AG04449 (cell line): ENCODE measurements at regions of chr14 and their contacts with region 1.

Region 1: DNA sequence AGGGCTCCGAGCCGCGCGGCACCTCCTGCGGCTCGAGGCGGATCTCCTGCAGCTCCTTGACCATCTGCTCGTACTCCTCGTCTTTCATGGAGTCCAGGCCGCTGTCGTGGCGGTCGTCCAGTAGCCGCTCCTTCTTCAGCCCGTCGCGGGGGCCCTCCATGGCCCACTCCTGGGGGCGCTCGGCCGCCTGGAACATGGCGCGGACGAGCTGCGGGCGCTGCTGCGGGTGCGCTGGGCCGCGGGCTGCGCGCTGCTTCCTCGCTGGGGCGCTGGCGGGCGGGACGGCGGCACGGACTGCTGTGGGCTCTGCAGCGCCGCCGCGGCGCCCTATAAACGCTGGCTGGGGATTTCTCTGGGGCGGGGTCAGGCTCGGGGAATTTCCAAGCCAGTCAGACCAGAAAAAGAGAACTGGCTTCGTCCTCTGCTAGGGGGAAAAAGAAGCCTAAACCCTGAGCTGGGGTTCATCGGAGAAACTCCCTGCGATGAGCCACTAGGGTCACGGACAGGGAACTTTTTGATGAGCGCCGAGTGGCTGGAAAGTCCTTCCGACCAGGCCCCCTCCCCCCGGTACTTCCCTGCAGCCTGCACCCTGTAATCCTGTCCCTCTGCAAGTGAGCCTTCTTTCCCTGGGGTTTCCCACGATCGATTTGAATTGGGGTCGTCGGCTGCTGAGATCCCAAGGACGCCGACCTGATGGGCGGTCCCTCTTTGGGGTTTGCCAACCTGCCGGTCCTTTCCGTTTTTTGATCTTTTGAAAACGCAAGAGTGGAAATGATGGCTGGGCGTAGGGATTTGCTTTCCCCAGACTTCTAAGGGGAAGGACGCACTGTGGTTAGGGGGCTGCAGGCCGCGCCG is at the start of gene NFKBIA:
- DNase-seq: no peak
- H3K4me3 ChIP-seq: peak within 1 kb of the TSS; percentile 87
- CTCF ChIP-seq: peak; percentile 47

Region 2: GRCh38 chr14:35159742-35160409 is 244.8 kb before region 1 on chr14:
- CTCF ChIA-PET with region 1: interaction called, 16 read pairs
- POLR2A ChIA-PET with region 1: no interaction called
- DNase-seq: peak; percentile 83
- H3K4me3 ChIP-seq: no peak overlapping the region; the same call in 1 of the 2 replicates
- CTCF ChIP-seq: no peak

Region 3: DNA sequence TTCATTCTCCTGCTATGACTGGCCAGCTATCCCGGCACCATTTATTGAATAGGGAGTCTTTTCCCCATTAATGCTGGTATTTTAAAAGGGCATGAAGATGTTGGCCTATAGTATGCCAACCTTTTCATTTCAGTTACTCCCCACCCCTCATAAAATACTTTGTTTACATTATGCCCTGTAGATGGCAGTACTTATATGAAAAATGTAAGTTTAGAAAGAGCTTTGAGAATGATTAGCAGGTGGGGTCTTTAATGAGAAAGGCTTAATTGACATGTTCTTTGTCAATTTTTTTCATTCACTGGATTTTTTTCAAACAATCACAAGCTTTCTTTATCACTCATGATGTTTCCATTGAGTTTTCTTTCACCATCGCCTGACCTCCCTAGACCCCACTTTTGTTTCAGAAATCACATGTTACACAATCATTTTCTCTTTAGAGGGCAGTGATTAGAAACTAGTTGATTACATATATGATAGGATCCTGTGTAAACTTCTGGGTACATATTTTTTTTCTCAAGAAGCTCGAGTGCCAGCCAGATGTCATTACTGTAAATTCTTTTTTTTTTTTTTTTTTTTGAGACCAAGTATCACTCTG is 175.1 kb before region 1 on chr14:
- CTCF ChIA-PET with region 1: interaction called, 33 read pairs
- POLR2A ChIA-PET with region 1: no interaction called
- DNase-seq: no peak
- H3K4me3 ChIP-seq: no peak overlapping the region
- CTCF ChIP-seq: no peak

Region 4: GRCh38 chr14:35292051-35292769 is 112.5 kb before region 1 on chr14 and contains the start of gene PSMA6:
- CTCF ChIA-PET with region 1: interaction called, 8 read pairs
- POLR2A ChIA-PET with region 1: interaction called, 44 read pairs
- DNase-seq: peak; percentile 92
- H3K4me3 ChIP-seq: peak within 1 kb of the TSS; percentile 98
- CTCF ChIP-seq: no peak

Region 5: DNA sequence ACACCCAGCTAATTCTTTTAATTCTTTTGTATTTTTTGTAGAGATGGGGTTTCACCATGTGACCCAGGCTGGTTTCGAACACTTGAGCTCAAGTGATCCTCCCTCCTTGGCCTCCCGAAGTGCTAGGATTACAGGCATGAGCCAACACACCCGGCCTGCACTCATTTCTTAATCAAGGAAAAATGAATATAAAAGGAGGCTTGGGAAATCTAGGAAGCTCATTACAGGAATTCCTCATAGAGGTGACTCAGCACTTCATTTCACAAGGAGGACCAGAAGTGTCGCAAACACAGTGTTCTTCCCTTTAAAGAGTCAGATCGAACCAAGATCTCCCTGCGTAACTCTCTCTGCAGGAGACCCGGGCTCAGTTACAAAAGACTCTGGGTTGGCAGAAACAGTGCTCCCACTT is 30.4 kb before region 1 on chr14:
- CTCF ChIA-PET with region 1: interaction called, 8 read pairs
- POLR2A ChIA-PET with region 1: interaction called, 18 read pairs
- DNase-seq: peak; percentile 94
- H3K4me3 ChIP-seq: no peak overlapping the region
- CTCF ChIP-seq: no peak

Region 6: GRCh38 chr14:35394326-35395013 is 10.2 kb before region 1 on chr14:
- CTCF ChIA-PET with region 1: interaction called, 15 read pairs
- POLR2A ChIA-PET with region 1: no interaction called
- DNase-seq: no peak
- H3K4me3 ChIP-seq: no peak overlapping the region
- CTCF ChIP-seq: no peak